ENCODE measurements at regions of chr11 and their contacts with region 1.

Region 1: DNA sequence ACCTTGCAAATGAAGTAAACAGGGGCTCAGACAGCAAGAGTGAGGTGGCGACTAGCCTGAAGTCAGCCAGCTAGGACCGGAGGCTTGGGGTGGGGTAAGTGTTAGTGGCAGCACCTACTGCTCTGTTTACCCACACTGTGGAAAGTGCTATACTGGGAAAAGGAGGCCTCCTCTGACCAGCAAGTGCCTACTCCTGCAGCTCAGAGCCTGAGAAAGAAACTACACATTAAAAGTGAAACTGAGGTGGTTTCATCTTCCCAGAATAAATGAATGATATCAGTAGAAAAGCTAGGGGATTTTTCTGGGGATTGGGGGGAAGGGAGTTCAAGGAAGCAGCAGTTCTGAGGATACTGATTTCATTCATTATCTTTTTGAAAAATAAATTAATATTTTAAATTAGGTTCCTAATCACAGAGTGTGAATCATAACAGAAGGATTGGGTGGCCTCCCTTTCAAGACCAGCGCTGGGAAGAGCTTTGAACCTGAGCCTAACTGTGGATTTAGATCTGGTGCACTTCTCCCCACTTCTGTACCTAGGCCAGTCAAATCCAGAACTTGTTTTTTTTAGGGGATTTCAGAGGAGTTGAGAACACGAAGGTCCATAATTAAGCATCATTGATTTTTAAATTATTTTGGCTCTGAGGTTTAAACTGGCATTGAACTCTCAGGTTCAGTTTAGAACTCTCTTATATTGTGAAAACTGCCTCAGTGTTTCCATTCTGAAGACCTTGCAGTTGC is 48.1 kb upstream of the GRAMD1B start:
- DNase-seq: peak; percentile 90
- ATAC-seq: peak; percentile 95
- H3K4me3 Mint-ChIP-seq: peak overlapping the region; percentile 7
- H3K27ac Mint-ChIP-seq: no peak overlapping the region
- H3K4me1 Mint-ChIP-seq: peaks cover 44% of the 10 kb centered on the region
- H3K27me3 Mint-ChIP-seq: no peaks in the 10 kb centered on the region

Region 2: DNA sequence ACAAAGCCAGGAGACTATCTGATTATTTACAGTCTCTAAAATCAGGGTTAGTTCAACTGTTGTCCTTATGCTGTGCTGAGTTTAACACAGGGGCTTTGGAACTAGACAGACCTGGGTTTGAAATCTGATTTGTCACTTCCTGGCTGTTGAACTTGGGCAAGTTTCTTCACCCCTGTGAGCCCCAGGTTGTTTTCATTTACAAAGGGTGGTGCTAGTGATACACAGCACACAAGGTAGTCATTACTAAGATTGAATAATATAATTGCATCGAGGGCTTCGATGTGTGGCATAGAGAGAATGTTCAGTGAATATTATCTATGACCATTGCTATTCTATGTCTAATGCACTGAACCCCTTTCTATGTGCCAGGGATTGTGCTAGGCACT is 223.4 kb before region 1 on chr11:
- CTCF ChIA-PET with region 1: no interaction called
- DNase-seq: no peak
- ATAC-seq: no peak
- H3K4me3 Mint-ChIP-seq: no peak overlapping the region
- H3K27ac Mint-ChIP-seq: no peak overlapping the region
- H3K4me1 Mint-ChIP-seq: peaks cover 9% of the 10 kb centered on the region
- H3K27me3 Mint-ChIP-seq: peaks cover 5% of the 10 kb centered on the region

Region 3: GRCh38 chr11:123219066-123219690 is 162.8 kb before region 1 on chr11:
- CTCF ChIA-PET with region 1: no interaction called
- DNase-seq: no peak
- ATAC-seq: no peak
- H3K4me3 Mint-ChIP-seq: no peak overlapping the region
- H3K27ac Mint-ChIP-seq: no peak overlapping the region
- H3K4me1 Mint-ChIP-seq: no peaks in the 10 kb centered on the region
- H3K27me3 Mint-ChIP-seq: peaks cover 40% of the 10 kb centered on the region

Region 4: GRCh38 chr11:123357961-123358841 is 23.8 kb before region 1 on chr11:
- CTCF ChIA-PET with region 1: interaction called, 20 read pairs
- DNase-seq: peak; percentile 76
- ATAC-seq: peak; percentile 91
- H3K4me3 Mint-ChIP-seq: peak overlapping the region; percentile 86
- H3K27ac Mint-ChIP-seq: peak overlapping the region; percentile 80
- H3K4me1 Mint-ChIP-seq: peaks cover 52% of the 10 kb centered on the region
- H3K27me3 Mint-ChIP-seq: peaks cover 27% of the 10 kb centered on the region

Region 5: DNA sequence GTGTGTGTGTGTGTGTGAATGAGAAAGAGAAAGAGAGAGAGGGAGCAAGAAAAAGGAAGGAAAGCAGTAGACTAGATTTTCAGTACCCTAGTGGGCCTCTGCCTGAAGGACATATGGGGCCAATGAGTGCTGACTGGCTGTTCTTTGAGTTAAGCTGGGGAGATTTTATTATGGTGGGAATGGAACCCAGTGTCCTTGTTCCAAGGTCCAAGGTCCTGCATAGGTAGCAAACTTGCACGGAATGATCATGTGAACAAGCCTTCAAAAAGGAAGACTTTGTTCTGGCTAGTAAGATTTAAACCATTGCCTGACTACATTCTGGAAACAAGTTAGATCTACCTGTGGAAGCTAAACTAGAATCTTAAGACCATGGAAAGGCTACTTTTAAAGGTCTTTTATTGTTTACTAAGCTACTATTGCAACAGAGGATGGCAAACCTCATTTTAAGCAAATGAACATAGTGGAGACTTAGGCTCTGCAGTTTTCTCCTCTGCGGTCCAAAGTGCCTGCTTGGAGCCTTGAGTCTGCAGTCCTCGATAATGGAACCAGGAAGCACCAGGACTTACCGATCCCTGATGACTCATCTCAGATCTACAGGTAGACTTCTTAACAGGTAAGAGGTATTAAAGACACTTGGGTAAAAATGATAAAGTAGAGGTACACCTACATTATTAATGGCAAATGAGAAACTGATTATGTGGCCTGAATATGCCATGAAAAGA is 37.9 kb after region 1 on chr11:
- CTCF ChIA-PET with region 1: no interaction called
- DNase-seq: no peak
- ATAC-seq: no peak
- H3K4me3 Mint-ChIP-seq: no peak overlapping the region
- H3K27ac Mint-ChIP-seq: no peak overlapping the region
- H3K4me1 Mint-ChIP-seq: peaks cover 15% of the 10 kb centered on the region
- H3K27me3 Mint-ChIP-seq: peaks cover 11% of the 10 kb centered on the region